Caco-2 (cell line): ENCODE measurements at regions of chr14 and their contacts with region 1.

Region 1: GRCh38 chr14:75293920-75294642 is 15.5 kb downstream of the FOS start:
- DNase-seq: peak; percentile 98
- H3K4me3 ChIP-seq: peak overlapping the region; percentile 40
- H3K4me3 Mint-ChIP-seq: peak overlapping the region; percentile 71
- H3K27ac Mint-ChIP-seq: peak overlapping the region; percentile 86
- H3K4me1 ChIP-seq: peaks cover 18% of the 10 kb centered on the region
- H3K4me1 Mint-ChIP-seq: peaks cover 6% of the 10 kb centered on the region
- H3K27me3 ChIP-seq: no peaks in the 10 kb centered on the region
- H3K27me3 Mint-ChIP-seq: no peaks in the 10 kb centered on the region
- CTCF ChIP-seq: peak in 1 of 2 experiments; percentile 14

Region 2: GRCh38 chr14:75126679-75127473 is 167.2 kb before region 1 on chr14 and contains the start of gene NEK9:
- CTCF ChIA-PET with region 1: interaction called, 7 read pairs
- POLR2A ChIA-PET with region 1: interaction called, 11 read pairs
- intact Hi-C with region 1: loop called (anchors 1 kb)
- DNase-seq: peak; percentile 91 to 93
- H3K4me3 ChIP-seq: peak within 1 kb of the TSS; percentile 96
- H3K4me3 Mint-ChIP-seq: peak within 1 kb of the TSS; percentile 80
- H3K27ac Mint-ChIP-seq: peak within 1 kb of the TSS; percentile 86
- H3K4me1 ChIP-seq: peaks cover 16% of the 10 kb centered on the region; the same call in 1 of the 2 replicates
- H3K4me1 Mint-ChIP-seq: no peaks in the 10 kb centered on the region
- H3K27me3 ChIP-seq: no peaks in the 10 kb centered on the region
- H3K27me3 Mint-ChIP-seq: no peaks in the 10 kb centered on the region
- CTCF ChIP-seq: no peak
- total RNA-seq, gene NEK9: 64.0 and 69.2 TPM in 2 replicates

Region 3: DNA sequence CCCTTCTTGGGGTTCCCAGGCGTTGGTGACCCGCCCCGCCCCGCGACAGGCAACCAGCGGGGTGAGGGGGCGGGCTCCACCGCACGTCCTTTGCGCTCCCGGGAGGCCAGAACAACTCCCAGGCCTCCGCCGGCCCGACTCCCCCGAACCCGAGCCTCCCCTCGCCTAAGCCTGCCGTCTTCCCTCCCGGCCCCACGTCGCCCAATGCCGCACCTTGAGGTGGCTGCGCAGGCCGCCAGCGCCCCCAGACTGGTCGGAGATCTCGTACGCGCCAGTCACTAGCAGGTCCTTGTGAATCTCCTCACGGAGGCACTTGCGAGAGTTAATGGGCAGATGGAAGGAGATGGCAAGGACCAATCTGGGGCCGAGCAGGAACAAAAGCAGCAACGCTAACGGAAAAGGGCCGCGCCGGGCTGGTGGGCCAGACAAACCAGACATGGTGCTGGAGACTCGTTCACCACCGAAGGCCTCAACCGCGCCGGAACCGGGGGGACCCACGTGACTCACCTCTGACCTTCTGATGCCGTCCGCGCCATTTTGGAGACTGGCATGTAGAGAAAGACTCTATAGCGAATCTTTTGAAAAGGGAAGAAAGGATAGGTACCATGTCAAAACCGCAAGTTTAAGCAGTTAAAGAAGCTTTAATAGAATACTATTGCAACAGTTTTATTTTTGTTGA is 117.8 kb before region 1 on chr14 and contains the start of gene TMED10:
- CTCF ChIA-PET with region 1: interaction called, 3 read pairs
- POLR2A ChIA-PET with region 1: no interaction called
- intact Hi-C with region 1: loop called (anchors 1 kb)
- DNase-seq: peak; percentile 90 to 91
- H3K4me3 ChIP-seq: peak within 1 kb of the TSS; percentile 91
- H3K4me3 Mint-ChIP-seq: peak within 1 kb of the TSS; percentile 99
- H3K27ac Mint-ChIP-seq: peak within 1 kb of the TSS; percentile 99
- H3K4me1 ChIP-seq: no peaks in the 10 kb centered on the region
- H3K4me1 Mint-ChIP-seq: peaks cover 12% of the 10 kb centered on the region
- H3K27me3 ChIP-seq: no peaks in the 10 kb centered on the region
- H3K27me3 Mint-ChIP-seq: no peaks in the 10 kb centered on the region
- CTCF ChIP-seq: peak in 1 of 2 experiments; percentile 15
- total RNA-seq, gene TMED10: 236 and 255 TPM in 2 replicates

Region 4: DNA sequence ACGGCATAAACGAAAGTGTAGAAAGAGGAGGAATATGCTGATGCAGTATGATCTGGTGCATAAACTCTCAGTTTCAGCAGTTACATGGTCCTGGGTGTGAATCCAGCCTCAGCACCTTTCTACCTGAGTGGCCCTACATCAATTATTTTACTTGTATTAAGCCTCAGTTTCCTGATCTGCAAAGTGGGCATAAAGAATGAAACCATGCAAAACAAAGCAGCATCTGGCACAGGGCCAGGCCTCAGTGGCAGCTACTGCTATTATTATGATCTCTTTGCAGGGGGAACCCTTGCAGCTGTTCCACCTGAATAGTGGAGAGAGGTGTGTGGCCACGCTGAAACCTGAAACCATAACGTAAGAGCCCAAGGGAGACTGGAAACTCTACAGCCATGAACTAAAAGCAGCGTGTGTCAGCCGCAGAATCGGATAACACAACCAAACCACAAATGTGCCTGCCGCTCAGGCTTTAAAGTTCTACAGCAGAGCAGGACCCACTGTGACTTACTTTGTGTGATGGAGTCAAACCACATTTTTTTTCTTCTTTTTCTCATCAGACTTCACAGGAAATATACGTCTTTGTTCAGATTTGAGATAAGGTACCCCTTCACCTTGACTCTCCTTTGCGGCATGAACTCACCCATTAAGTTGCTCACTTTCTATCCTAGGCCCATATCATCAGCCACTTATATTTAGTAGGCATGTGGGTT is 44.7 kb before region 1 on chr14:
- CTCF ChIA-PET with region 1: no interaction called
- POLR2A ChIA-PET with region 1: interaction called, 11 read pairs
- intact Hi-C with region 1: no loop called
- DNase-seq: no peak
- H3K4me3 ChIP-seq: no peak overlapping the region
- H3K4me3 Mint-ChIP-seq: no peak overlapping the region
- H3K27ac Mint-ChIP-seq: no peak overlapping the region
- H3K4me1 ChIP-seq: peaks cover 14% of the 10 kb centered on the region
- H3K4me1 Mint-ChIP-seq: peaks cover 13% of the 10 kb centered on the region
- H3K27me3 ChIP-seq: no peaks in the 10 kb centered on the region
- H3K27me3 Mint-ChIP-seq: no peaks in the 10 kb centered on the region
- CTCF ChIP-seq: no peak

Region 5: DNA sequence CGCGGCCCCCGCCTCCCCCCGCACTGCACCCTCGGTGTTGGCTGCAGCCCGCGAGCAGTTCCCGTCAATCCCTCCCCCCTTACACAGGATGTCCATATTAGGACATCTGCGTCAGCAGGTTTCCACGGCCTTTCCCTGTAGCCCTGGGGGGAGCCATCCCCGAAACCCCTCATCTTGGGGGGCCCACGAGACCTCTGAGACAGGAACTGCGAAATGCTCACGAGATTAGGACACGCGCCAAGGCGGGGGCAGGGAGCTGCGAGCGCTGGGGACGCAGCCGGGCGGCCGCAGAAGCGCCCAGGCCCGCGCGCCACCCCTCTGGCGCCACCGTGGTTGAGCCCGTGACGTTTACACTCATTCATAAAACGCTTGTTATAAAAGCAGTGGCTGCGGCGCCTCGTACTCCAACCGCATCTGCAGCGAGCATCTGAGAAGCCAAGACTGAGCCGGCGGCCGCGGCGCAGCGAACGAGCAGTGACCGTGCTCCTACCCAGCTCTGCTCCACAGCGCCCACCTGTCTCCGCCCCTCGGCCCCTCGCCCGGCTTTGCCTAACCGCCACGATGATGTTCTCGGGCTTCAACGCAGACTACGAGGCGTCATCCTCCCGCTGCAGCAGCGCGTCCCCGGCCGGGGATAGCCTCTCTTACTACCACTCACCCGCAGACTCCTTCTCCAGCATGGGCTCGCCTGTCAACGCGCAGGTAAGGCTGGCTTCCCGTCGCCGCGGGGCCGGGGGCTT is 15.5 kb before region 1 on chr14 and contains the start of gene FOS:
- CTCF ChIA-PET with region 1: interaction called, 36 read pairs
- POLR2A ChIA-PET with region 1: interaction called, 99 read pairs
- intact Hi-C with region 1: loop called (anchors 1 kb)
- DNase-seq: peak; percentile 92 to 95
- H3K4me3 ChIP-seq: peak within 1 kb of the TSS; percentile 96
- H3K4me3 Mint-ChIP-seq: peak within 1 kb of the TSS; percentile 89
- H3K27ac Mint-ChIP-seq: peak within 1 kb of the TSS; percentile 99
- H3K4me1 ChIP-seq: peaks cover 23% of the 10 kb centered on the region
- H3K4me1 Mint-ChIP-seq: peaks cover 14% of the 10 kb centered on the region
- H3K27me3 ChIP-seq: no peaks in the 10 kb centered on the region
- H3K27me3 Mint-ChIP-seq: no peaks in the 10 kb centered on the region
- CTCF ChIP-seq: no peak
- total RNA-seq, gene FOS: 72.7 and 73.7 TPM in 2 replicates

Region 6: GRCh38 chr14:75542588-75543091 is 248.6 kb after region 1 on chr14:
- CTCF ChIA-PET with region 1: no interaction called
- POLR2A ChIA-PET with region 1: no interaction called
- intact Hi-C with region 1: no loop called
- DNase-seq: no peak
- H3K4me3 ChIP-seq: no peak overlapping the region
- H3K4me3 Mint-ChIP-seq: no peak overlapping the region
- H3K27ac Mint-ChIP-seq: no peak overlapping the region
- H3K4me1 ChIP-seq: no peaks in the 10 kb centered on the region
- H3K4me1 Mint-ChIP-seq: no peaks in the 10 kb centered on the region
- H3K27me3 ChIP-seq: no peaks in the 10 kb centered on the region
- H3K27me3 Mint-ChIP-seq: no peaks in the 10 kb centered on the region
- CTCF ChIP-seq: no peak